A673 (cell line): ENCODE measurements at regions of chr2 and their contacts with region 1.

Region 1: GRCh38 chr2:211477537-211478275 is 921.3 kb downstream of the CPS1 start:
- DNase-seq: no peak
- H3K4me3 ChIP-seq: no peak overlapping the region
- H3K27ac ChIP-seq: no peak overlapping the region
- H3K4me1 ChIP-seq: no peaks in the 10 kb centered on the region
- H3K27me3 ChIP-seq: no peaks in the 10 kb centered on the region
- CTCF ChIP-seq: no peak

Region 2: GRCh38 chr2:211281430-211282073 is 196.2 kb before region 1 on chr2:
- CTCF ChIA-PET with region 1: no interaction called
- POLR2A ChIA-PET with region 1: no interaction called
- intact Hi-C with region 1: no loop called
- DNase-seq: no peak
- H3K4me3 ChIP-seq: no peak overlapping the region
- H3K27ac ChIP-seq: no peak overlapping the region
- H3K4me1 ChIP-seq: no peaks in the 10 kb centered on the region
- H3K27me3 ChIP-seq: no peaks in the 10 kb centered on the region
- CTCF ChIP-seq: no peak

Region 3: DNA sequence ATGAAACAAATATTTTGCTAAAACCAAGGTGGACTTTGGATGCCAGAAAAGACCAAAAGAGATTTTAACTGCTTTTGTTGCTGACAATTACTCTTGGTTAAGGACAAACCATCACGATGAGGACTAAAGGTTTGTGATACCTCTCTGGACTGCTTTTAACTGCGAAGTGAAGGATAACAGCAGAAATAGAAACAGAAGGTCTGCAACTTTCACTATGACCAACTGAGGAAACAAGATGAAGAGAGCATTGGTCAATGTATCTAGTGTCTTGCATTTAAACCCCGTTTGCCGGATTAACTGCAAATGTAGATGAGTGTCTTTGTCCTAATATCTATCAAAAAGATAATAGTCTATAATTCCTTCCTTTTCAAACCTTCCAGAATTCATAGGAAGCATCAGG is 519.2 kb after region 1 on chr2:
- CTCF ChIA-PET with region 1: no interaction called
- POLR2A ChIA-PET with region 1: no interaction called
- intact Hi-C with region 1: loop called (anchors 10 kb)
- DNase-seq: no peak
- H3K4me3 ChIP-seq: no peak overlapping the region
- H3K27ac ChIP-seq: no peak overlapping the region
- H3K4me1 ChIP-seq: peaks cover 21% of the 10 kb centered on the region
- H3K27me3 ChIP-seq: no peaks in the 10 kb centered on the region
- CTCF ChIP-seq: no peak